ENCODE measurements at regions of chr15 and their contacts with region 1.

Region 1: DNA sequence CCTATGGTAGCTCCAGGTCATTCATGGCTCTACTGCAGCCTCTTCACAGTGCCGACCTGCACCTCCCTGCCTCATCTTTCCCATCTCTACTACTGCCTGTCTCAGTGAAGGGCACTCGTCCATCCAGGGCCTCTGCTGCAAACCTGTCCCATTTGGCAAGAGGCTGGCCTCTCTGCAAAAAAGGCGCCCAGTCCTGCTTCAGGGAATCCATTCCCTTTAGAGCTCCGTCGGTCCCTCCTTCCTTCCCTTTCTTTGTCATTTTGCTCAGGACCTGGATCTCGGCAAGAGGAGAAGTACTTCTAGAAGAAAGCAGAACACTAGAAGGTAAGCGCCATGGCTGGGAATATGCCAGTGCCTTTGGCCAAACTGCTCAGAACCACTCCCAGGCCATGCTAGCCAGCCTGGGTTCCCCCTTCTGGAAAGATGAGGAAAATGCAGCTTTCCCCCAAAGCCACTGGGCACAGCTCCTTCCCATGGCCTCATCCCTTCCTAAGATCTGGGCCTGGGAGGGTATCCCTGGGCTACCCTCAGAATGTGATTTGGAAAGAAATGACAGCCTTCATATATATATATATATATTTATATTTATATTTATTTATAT is 6.4 kb upstream of the ISL2 start:
- DNase-seq: no peak
- H3K4me3 ChIP-seq: no peak overlapping the region
- H3K27ac ChIP-seq: no peak overlapping the region
- H3K4me1 ChIP-seq: peaks cover 2% of the 10 kb centered on the region in 4 donors
- H3K27me3 ChIP-seq: peaks cover 0 to 61% (median 0%) of the 10 kb centered on the region in 4 donors
- CTCF ChIP-seq: peak; percentile 47 to 62 (median 55)
- EP300 ChIP-seq: no peak
- POLR2A ChIP-seq: no peak

Region 2: DNA sequence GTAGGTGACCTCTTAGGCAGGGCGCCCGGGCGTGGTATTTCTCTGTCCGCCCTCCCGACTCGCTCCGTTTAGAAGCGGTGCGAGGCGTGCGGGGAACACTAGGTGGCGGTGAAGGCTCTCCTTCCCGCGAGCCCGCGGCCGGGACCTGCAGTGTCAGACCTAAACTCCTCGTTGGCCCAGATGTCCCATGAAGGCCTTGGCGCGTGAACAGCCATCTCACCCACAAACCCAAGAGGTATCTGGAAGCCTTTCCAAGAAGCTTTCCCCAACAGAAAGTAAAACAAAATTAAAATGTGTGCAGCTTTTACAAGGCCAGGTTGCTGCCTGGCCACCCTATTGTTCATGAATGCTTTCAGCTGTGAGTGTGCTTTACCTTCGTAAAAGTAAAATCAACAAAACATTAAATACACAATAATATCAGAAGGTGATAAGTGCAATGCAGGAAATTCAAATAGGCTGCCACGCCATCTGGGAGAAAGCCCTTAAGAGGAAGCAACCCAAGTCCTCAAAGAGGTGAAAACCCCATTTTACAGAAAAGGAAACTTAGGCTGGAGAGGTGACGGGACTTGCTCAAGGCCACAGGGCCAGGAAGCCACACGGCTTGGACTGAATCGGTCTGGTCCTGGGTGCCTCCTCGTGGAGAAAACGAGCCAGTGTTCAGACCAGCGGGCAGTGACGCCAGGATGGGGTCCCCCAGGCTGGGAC is 139.2 kb before region 1 on chr15:
- intact Hi-C with region 1: loop called (anchors 5 kb)
- DNase-seq: peak; percentile 93
- H3K4me3 ChIP-seq: peak overlapping the region in 1 of 4 donors; percentile 34
- H3K27ac ChIP-seq: no peak overlapping the region
- H3K4me1 ChIP-seq: peaks cover 14 to 26% (median 25%) of the 10 kb centered on the region in 4 donors
- H3K27me3 ChIP-seq: peaks cover 0 to 66% (median 6%) of the 10 kb centered on the region in 4 donors
- CTCF ChIP-seq: peak; percentile 84 to 92 (median 92)
- EP300 ChIP-seq: no peak
- POLR2A ChIP-seq: no peak

Region 3: GRCh38 chr15:76376029-76376428 is 45.8 kb after region 1 on chr15:
- intact Hi-C with region 1: no loop called
- DNase-seq: no peak
- H3K4me3 ChIP-seq: no peak overlapping the region
- H3K27ac ChIP-seq: no peak overlapping the region
- H3K4me1 ChIP-seq: no peaks in the 10 kb centered on the region
- H3K27me3 ChIP-seq: no peaks in the 10 kb centered on the region
- CTCF ChIP-seq: no peak
- EP300 ChIP-seq: no peak
- POLR2A ChIP-seq: no peak